PC-9 (cell line): ENCODE measurements at regions of chr3 and their contacts with region 1.

Region 1: GRCh38 chr3:185659942-185660921 is 74.1 kb downstream of the SENP2 start:
- DNase-seq: peak; percentile 74
- H3K4me3 ChIP-seq: no peak overlapping the region
- H3K27ac ChIP-seq: peak overlapping the region; percentile 1; the same call in 1 of the 2 replicates
- H3K4me1 ChIP-seq: peaks cover 17% of the 10 kb centered on the region
- H3K27me3 ChIP-seq: no peaks in the 10 kb centered on the region
- CTCF ChIP-seq: peak; percentile 100

Region 2: DNA sequence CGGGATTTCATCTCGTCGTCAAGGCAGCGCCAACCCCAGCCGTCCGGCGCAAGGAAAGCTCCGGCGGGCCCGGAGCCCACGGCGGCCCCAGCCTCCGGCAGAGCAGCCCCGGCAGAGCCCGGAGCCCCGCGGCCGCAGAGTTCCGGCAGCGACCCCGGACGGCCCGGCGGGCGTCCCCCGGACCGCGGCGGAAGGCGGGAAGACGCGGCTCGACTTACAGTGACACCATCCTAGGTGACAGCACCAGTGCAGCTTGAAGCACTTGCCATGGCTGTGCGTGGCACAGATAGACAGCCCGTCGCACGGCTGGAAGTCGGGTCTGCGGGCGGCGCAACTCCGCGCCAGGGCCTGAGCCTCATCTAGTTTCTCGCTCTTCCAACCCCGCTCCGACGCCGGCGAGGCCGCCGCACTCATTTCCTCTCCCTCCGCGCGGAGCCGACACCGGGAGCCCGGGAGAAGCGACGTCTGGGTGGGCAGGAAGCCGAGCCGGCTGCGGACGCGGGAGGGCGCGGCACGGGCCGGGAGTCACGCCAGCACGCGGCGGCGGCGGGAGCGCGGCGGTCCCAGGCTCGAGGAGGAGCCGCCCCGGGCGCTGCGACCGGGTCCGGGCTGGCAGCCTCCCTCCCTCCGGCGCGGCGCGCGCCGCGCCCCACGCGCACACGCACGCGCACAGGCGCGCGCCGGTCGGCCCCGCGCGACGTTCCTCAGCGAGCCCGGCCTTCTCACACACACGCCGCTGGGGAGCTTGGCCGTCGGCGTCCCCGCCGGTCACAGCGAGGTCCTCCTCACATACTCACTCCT is 507.6 kb before region 1 on chr3 and contains the start of gene C3orf70:
- CTCF ChIA-PET with region 1: no interaction called
- POLR2A ChIA-PET with region 1: no interaction called
- intact Hi-C with region 1: no loop called
- DNase-seq: peak in 1 of 2 experiments; percentile 26
- H3K4me3 ChIP-seq: no peak within 1 kb of the TSS
- H3K27ac ChIP-seq: no peak within 1 kb of the TSS
- H3K4me1 ChIP-seq: no peaks in the 10 kb centered on the region
- H3K27me3 ChIP-seq: peaks cover 73% of the 10 kb centered on the region
- CTCF ChIP-seq: no peak
- total RNA-seq, gene C3orf70: not detected in 2 replicates

Region 3: DNA sequence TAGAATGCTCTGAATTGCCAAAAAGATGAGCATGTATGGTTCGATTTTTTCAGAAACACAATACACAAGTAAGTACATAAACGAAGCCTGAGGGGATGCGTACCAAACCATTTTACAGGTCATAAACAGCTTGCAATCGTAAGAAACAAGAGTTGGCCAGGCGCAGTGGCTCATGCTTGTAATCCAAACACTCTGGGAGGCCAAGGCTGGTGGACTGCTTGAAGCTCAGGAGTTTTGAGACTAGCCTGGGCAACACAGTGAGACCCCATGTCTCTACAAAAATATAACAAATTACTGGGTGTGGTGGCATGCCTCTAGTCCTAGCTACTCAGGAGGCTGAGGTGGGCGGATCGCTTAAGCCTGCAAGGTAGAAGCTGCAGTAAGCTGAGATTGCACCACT is 264.1 kb after region 1 on chr3:
- CTCF ChIA-PET with region 1: interaction called, 3 read pairs
- POLR2A ChIA-PET with region 1: no interaction called
- intact Hi-C with region 1: loop called (anchors 5 kb)
- DNase-seq: no peak
- H3K4me3 ChIP-seq: no peak overlapping the region
- H3K27ac ChIP-seq: no peak overlapping the region
- H3K4me1 ChIP-seq: peaks cover 23% of the 10 kb centered on the region
- H3K27me3 ChIP-seq: no peaks in the 10 kb centered on the region
- CTCF ChIP-seq: no peak

Region 4: GRCh38 chr3:185942907-185943759 is 282.9 kb after region 1 on chr3:
- CTCF ChIA-PET with region 1: interaction called, 15 read pairs
- POLR2A ChIA-PET with region 1: interaction called, 6 read pairs
- intact Hi-C with region 1: no loop called
- DNase-seq: peak; percentile 86 to 93
- H3K4me3 ChIP-seq: no peak overlapping the region; the same call in 1 of the 2 replicates
- H3K27ac ChIP-seq: no peak overlapping the region
- H3K4me1 ChIP-seq: peaks cover 48% of the 10 kb centered on the region
- H3K27me3 ChIP-seq: no peaks in the 10 kb centered on the region
- CTCF ChIP-seq: peak; percentile 100

Region 5: GRCh38 chr3:186277268-186277909 is 617.2 kb after region 1 on chr3:
- CTCF ChIA-PET with region 1: interaction called, 5 read pairs
- POLR2A ChIA-PET with region 1: no interaction called
- intact Hi-C with region 1: loop called (anchors 5 kb)
- DNase-seq: peak; percentile 50 to 53
- H3K4me3 ChIP-seq: no peak overlapping the region
- H3K27ac ChIP-seq: no peak overlapping the region
- H3K4me1 ChIP-seq: no peaks in the 10 kb centered on the region
- H3K27me3 ChIP-seq: peaks cover 62% of the 10 kb centered on the region
- CTCF ChIP-seq: peak; percentile 70